Common myeloid progenitor, CD34-positive (primary cell): ENCODE measurements at regions of chr10 and their contacts with region 1.

Region 1: DNA sequence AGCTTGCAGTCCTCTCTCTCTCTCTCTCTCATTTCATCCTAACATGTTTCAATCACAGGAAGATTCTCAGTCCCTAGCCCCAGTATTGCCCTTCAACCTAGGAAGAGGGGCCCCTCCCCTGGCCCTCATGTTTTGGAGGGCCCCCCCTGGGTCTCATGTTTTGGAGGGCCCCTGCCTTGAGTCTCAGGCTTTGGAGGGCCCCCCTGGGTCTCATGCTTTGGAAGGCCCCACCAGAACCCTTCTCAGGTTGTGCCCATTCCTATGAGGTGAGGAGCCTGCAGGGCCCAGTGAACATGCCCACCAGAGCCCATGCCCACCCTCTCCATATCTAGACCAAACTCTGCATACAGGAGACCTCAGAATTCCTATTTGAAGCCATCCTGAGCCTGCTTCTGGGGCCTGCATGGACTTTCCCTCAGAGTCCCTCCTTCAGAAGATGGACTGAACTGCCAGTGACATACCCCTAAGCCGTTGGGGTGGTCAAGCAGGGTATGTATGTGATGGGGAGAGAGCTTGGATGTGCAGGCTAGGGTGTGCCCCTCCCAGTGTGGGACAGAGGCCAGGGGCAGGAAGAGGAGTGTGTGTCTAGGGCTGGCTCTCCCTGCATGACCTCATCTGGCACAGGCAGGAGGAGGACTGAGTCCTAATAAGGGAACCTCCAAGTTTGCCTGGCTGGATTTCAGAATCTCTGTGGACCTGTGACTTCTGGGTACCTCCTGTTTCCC is 8.1 kb upstream of the VDAC2 start:
- DNase-seq: no peak
- H3K4me3 ChIP-seq: no peak overlapping the region
- H3K27ac ChIP-seq: no peak overlapping the region
- H3K4me1 ChIP-seq: no peaks in the 10 kb centered on the region
- H3K27me3 ChIP-seq: no peaks in the 10 kb centered on the region

Region 2: DNA sequence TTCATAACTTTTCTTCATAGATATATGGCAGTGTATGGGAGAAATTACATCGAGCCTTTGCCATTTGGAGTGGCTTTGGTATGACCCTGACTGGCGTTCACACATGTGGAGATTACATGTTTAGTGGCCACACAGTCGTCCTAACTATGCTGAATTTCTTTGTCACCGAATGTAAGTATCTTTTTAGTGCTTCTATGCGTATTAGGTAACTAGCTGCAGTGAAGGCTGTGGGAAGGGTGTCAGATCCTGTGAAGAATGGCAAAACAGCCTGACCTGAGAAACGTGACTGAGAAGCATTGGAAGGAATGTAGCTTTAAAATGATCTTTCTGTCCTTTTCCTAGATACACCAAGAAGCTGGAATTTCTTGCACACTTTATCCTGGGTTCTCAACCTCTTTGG is 26.4 kb before region 1 on chr10:
- CTCF ChIA-PET with region 1: no interaction called
- POLR2A ChIA-PET with region 1: no interaction called
- DNase-seq: no peak
- H3K4me3 ChIP-seq: no peak overlapping the region
- H3K27ac ChIP-seq: no peak overlapping the region
- H3K4me1 ChIP-seq: no peaks in the 10 kb centered on the region
- H3K27me3 ChIP-seq: no peaks in the 10 kb centered on the region

Region 3: GRCh38 chr10:75187961-75188426 is 14.5 kb before region 1 on chr10:
- CTCF ChIA-PET with region 1: interaction called, 13 read pairs
- POLR2A ChIA-PET with region 1: interaction called, 4 read pairs
- DNase-seq: peak; percentile 70 to 88 (median 83)
- H3K4me3 ChIP-seq: no peak overlapping the region
- H3K27ac ChIP-seq: no peak overlapping the region
- H3K4me1 ChIP-seq: no peaks in the 10 kb centered on the region
- H3K27me3 ChIP-seq: no peaks in the 10 kb centered on the region

Region 4: GRCh38 chr10:75294866-75295701 is 92.6 kb after region 1 on chr10:
- CTCF ChIA-PET with region 1: no interaction called
- POLR2A ChIA-PET with region 1: no interaction called
- DNase-seq: peak; percentile 79 to 92 (median 85)
- H3K4me3 ChIP-seq: peak overlapping the region; percentile 47 to 82 (median 74)
- H3K27ac ChIP-seq: peak overlapping the region; percentile 19 to 60
- H3K4me1 ChIP-seq: peaks cover 17 to 31% (median 21%) of the 10 kb centered on the region in 4 experiments
- H3K27me3 ChIP-seq: peaks cover 0 to 2% (median 0%) of the 10 kb centered on the region in 5 experiments